A549 (cell line): ENCODE measurements at regions of chr11 and their contacts with region 1.

Region 1: GRCh38 chr11:102341844-102342318 is 5.1 kb upstream of the BIRC2 start:
- DNase-seq: peak; percentile 68 to 87
- ATAC-seq: peak; percentile 73 to 85
- H3K4me3 ChIP-seq: no peak overlapping the region
- H3K27ac ChIP-seq: no peak overlapping the region; a peak in 2 of 6 replicates
- H3K4me1 ChIP-seq: peaks cover 25% of the 10 kb centered on the region
- CTCF ChIP-seq: peak; percentile 79
- EP300 ChIP-seq: no peak
- POLR2A ChIP-seq: no peak
- RAD21 ChIP-seq: peak; percentile 72 to 83

Region 2: DNA sequence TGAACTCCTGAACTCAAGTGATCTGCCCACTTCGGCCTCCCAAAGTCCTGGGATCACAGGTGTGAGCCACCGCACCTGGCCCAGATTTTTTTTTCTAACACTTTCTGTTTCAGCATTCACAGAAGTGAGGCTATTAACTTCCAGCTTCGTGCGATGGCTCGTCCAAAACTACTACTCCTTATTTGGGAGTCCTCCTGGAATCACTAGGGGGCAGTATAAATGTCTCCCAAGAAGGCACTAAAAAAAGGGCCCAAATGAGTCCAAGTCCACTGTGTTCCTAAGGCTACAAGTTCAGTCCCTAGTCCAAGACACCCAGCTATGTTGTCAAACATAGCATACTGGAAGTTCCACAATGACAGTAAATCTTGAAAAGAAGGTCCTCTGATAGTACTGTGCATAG is 87.8 kb before region 1 on chr11:
- CTCF ChIA-PET with region 1: no interaction called
- POLR2A ChIA-PET with region 1: no interaction called
- DNase-seq: peak; percentile 21 to 36
- ATAC-seq: peak in 1 of 2 experiments; percentile 50; a peak in 2 of 6 replicates
- H3K4me3 ChIP-seq: no peak overlapping the region
- H3K27ac ChIP-seq: no peak overlapping the region
- H3K4me1 ChIP-seq: no peaks in the 10 kb centered on the region
- CTCF ChIP-seq: no peak; the same call in 2 of the 3 replicates
- EP300 ChIP-seq: no peak
- POLR2A ChIP-seq: no peak
- RAD21 ChIP-seq: 0 out of 5 replicates have a peak, but pooled peaks of 1 of the 2 experiments have one; percentile 6

Region 3: DNA sequence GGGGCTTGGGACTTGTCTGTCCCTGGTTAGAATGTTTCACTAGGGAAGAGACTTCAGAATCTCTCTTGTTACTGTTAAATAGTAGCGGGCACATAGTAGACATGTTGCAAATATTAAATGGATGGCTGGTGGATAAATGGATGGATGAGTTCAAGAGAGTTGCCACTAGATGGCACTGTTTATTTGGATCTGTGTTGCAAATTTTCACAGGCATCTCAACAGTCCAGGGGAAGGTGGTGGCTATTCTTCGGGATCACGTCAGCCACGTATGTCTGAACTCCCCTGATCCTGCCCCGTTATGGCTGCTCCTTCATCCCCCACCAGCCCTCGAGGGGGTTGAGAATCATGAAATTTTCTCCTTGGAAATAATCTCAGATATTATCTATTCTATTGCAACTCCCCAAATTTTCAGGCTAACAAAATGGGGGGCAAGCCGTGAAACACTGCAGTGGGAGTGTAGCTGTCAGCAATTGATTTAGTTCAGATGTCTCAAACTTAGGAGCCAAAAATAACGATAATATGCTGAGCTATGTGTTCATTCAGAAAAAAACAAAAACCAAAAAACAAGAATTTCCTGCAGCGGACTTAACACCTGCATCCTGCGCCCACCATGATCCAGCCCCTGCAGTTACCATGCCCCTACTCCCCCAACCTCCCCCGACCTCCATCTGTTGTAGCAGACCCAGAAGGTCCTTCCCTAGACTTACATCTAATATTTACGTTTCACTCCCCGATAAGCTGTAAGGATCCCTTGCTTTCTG is 53.7 kb before region 1 on chr11:
- CTCF ChIA-PET with region 1: interaction called, 38 read pairs
- POLR2A ChIA-PET with region 1: no interaction called
- DNase-seq: peak; percentile 66 to 80
- ATAC-seq: peak; percentile 89 to 95
- H3K4me3 ChIP-seq: no peak overlapping the region; the same call in 2 of the 3 replicates
- H3K27ac ChIP-seq: peak overlapping the region; percentile 57 to 72; a peak in 5 of 6 replicates
- H3K4me1 ChIP-seq: peaks cover 28% of the 10 kb centered on the region; the same call in 2 of the 3 replicates
- CTCF ChIP-seq: peak; percentile 70
- EP300 ChIP-seq: no peak
- POLR2A ChIP-seq: no peak
- RAD21 ChIP-seq: peak; percentile 76 to 83

Region 4: GRCh38 chr11:102306048-102306585 is 35.8 kb before region 1 on chr11:
- CTCF ChIA-PET with region 1: interaction called, 10 read pairs
- POLR2A ChIA-PET with region 1: no interaction called
- DNase-seq: peak; percentile 51 to 86
- ATAC-seq: peak; percentile 92 to 93
- H3K4me3 ChIP-seq: peak overlapping the region; percentile 6; the same call in 2 of the 3 replicates
- H3K27ac ChIP-seq: peak overlapping the region; percentile 77 to 85
- H3K4me1 ChIP-seq: peaks cover 34% of the 10 kb centered on the region
- CTCF ChIP-seq: 0 out of 3 replicates have a peak, but pooled peaks have one; percentile 11
- EP300 ChIP-seq: peak in 1 of 2 experiments; percentile 25; a peak in 1 of 5 replicates
- POLR2A ChIP-seq: no peak
- RAD21 ChIP-seq: peak in 1 of 2 experiments; percentile 14; a peak in 2 of 5 replicates

Region 5: GRCh38 chr11:102495161-102496042 is 153.5 kb after region 1 on chr11:
- CTCF ChIA-PET with region 1: interaction called, 16 read pairs
- POLR2A ChIA-PET with region 1: no interaction called
- DNase-seq: peak; percentile 41 to 86
- ATAC-seq: peak; percentile 81 to 85
- H3K4me3 ChIP-seq: no peak overlapping the region
- H3K27ac ChIP-seq: peak overlapping the region; percentile 71 to 80
- H3K4me1 ChIP-seq: peaks cover 36% of the 10 kb centered on the region
- CTCF ChIP-seq: peak; percentile 69
- EP300 ChIP-seq: no peak
- POLR2A ChIP-seq: no peak
- RAD21 ChIP-seq: peak; percentile 83 to 91

Region 6: DNA sequence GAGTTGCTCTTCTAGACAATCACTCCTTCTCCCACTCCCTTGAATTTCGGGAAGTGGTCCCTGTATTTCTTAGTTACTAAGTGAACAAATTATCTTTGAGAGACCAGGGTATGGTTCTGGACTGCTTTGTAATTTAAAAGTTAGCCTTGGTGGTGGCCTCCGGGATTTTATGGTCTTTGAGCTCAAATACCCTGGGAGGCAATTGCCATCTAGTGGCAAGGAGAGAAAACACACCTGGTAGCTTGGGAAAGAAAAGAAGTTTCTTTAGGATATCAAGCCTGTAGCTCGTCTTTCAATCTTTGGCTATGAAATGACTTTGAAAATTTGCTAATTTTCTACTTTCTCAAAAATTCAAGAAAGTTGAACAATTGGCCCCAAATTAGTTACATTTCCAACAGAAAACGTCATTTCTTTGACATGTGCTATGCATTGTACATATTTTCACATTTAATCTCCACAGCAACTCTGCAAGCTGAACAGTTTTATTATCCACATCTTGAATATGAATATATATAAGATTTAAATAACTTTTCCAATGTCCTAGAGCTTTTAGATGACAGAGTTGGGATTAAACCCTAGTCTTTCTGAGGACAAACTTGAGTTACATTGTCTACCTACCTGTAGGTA is 324.6 kb after region 1 on chr11:
- CTCF ChIA-PET with region 1: interaction called, 15 read pairs
- POLR2A ChIA-PET with region 1: interaction called, 5 read pairs
- DNase-seq: peak; percentile 13 to 46
- ATAC-seq: peak; percentile 70 to 84; a peak in 5 of 6 replicates
- H3K4me3 ChIP-seq: no peak overlapping the region
- H3K27ac ChIP-seq: 0 out of 6 replicates have a peak overlapping the region, but pooled peaks of 1 of the 2 experiments have one; percentile 32
- H3K4me1 ChIP-seq: no peaks in the 10 kb centered on the region
- CTCF ChIP-seq: peak; percentile 78
- EP300 ChIP-seq: no peak
- POLR2A ChIP-seq: no peak
- RAD21 ChIP-seq: peak; percentile 86 to 87